ENCODE measurements at regions of chr11 and their contacts with region 1.

Region 1: GRCh38 chr11:124875943-124876817 is 10.9 kb downstream of the ROBO3 start:
- DNase-seq: peak; percentile 91
- ATAC-seq: peak; percentile 94
- H3K4me3 Mint-ChIP-seq: peak overlapping the region; percentile 83
- H3K27ac Mint-ChIP-seq: peak overlapping the region; percentile 91
- H3K4me1 Mint-ChIP-seq: peaks cover 16% of the 10 kb centered on the region
- H3K27me3 Mint-ChIP-seq: peaks cover 25% of the 10 kb centered on the region
- CTCF ChIP-seq: peak; percentile 80

Region 2: GRCh38 chr11:124865921-124866583 is 10.1 kb before region 1 on chr11:
- CTCF ChIA-PET with region 1: interaction called, 23 read pairs
- POLR2A ChIA-PET with region 1: no interaction called
- intact Hi-C with region 1: no loop called
- DNase-seq: peak; percentile 64
- ATAC-seq: peak; percentile 65
- H3K4me3 Mint-ChIP-seq: no peak overlapping the region
- H3K27ac Mint-ChIP-seq: no peak overlapping the region
- H3K4me1 Mint-ChIP-seq: peaks cover 36% of the 10 kb centered on the region
- H3K27me3 Mint-ChIP-seq: peaks cover 88% of the 10 kb centered on the region
- CTCF ChIP-seq: peak; percentile 75

Region 3: DNA sequence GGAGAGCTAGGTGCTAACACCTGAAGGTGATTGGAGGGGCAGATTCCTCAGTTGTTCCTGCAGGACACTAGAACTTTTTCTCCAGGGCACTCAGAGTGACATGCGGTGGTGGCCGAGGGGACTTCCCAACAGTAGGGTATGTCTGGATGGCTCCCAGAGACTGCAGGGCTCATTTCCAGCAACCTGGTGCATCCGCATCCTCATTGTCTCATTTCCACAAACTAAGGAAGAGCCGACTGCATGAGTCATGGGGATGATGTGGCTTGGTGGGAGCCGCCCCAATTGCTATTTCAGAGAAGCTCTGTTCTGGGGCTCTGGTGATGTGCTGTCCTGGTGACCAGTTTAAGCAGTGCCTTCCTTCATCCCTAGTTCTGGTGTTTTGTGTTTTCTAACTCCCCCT is 24.3 kb after region 1 on chr11:
- CTCF ChIA-PET with region 1: no interaction called
- POLR2A ChIA-PET with region 1: no interaction called
- intact Hi-C with region 1: no loop called
- DNase-seq: no peak
- ATAC-seq: no peak
- H3K4me3 Mint-ChIP-seq: no peak overlapping the region
- H3K27ac Mint-ChIP-seq: no peak overlapping the region
- H3K4me1 Mint-ChIP-seq: peaks cover 2% of the 10 kb centered on the region
- H3K27me3 Mint-ChIP-seq: peaks cover 8% of the 10 kb centered on the region
- CTCF ChIP-seq: no peak

Region 4: DNA sequence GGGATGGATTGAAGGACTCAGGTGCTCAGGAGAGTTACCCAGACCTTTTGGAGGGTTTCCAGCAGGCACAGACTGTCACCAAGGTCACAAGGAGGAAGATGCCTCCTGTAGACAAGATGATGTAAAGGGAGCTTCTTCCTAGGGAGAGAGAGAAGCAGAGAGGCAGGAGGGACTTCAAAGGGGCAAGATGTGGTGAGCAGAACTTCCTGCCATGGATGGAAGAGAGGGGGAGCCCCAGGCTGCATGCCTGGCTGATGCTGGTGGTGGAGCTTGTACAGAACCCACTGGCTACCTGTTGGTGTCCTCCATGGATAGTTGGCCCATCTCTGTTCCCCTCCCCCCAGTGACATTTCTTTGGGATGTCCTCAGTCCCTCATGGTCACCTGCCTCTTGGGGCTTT is 47.1 kb after region 1 on chr11:
- CTCF ChIA-PET with region 1: interaction called, 13 read pairs
- POLR2A ChIA-PET with region 1: interaction called, 4 read pairs
- intact Hi-C with region 1: no loop called
- DNase-seq: peak; percentile 32
- ATAC-seq: peak; percentile 42
- H3K4me3 Mint-ChIP-seq: no peak overlapping the region
- H3K27ac Mint-ChIP-seq: no peak overlapping the region
- H3K4me1 Mint-ChIP-seq: peaks cover 13% of the 10 kb centered on the region
- H3K27me3 Mint-ChIP-seq: no peaks in the 10 kb centered on the region
- CTCF ChIP-seq: no peak

Region 5: GRCh38 chr11:124953753-124954589 is 77.8 kb after region 1 on chr11 and contains the start of gene CCDC15:
- CTCF ChIA-PET with region 1: interaction called, 21 read pairs
- POLR2A ChIA-PET with region 1: interaction called, 3 read pairs
- intact Hi-C with region 1: loop called (anchors 2 kb)
- DNase-seq: peak; percentile 98
- ATAC-seq: peak; percentile 97
- H3K4me3 Mint-ChIP-seq: no peak within 1 kb of the TSS
- H3K27ac Mint-ChIP-seq: no peak within 1 kb of the TSS
- H3K4me1 Mint-ChIP-seq: peaks cover 9% of the 10 kb centered on the region
- H3K27me3 Mint-ChIP-seq: no peaks in the 10 kb centered on the region
- CTCF ChIP-seq: no peak
- total RNA-seq, gene CCDC15: 4.2 to 4.8 TPM